ENCODE measurements at regions of chr15 and their contacts with region 1.

Region 1: GRCh38 chr15:90071208-90071807 is 31.0 kb downstream of the IDH2 start:
- DNase-seq: peak; percentile 93

Region 2: DNA sequence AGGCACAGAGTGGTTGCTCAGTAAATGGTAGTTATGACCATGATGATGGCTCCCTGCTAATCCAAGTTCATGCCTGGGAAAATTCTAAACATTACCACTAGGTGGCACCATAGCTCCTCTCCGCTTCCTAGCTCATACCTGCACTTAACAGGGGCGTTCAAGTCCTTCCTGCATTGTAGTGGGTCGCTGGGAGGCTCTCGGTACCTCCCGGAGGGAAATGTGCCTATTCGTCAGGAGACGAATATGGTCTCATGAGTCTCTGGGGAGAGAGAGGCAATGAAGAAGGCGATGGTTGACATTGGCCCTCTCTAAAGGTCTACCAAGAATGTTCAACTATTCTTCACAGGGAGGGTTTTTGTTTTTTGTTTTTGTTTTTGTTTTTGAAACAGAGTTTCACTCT is 331.2 kb before region 1 on chr15:
- intact Hi-C with region 1: loop called in 1 of 2 experiments (anchors 10 kb)
- DNase-seq: no peak

Region 3: DNA sequence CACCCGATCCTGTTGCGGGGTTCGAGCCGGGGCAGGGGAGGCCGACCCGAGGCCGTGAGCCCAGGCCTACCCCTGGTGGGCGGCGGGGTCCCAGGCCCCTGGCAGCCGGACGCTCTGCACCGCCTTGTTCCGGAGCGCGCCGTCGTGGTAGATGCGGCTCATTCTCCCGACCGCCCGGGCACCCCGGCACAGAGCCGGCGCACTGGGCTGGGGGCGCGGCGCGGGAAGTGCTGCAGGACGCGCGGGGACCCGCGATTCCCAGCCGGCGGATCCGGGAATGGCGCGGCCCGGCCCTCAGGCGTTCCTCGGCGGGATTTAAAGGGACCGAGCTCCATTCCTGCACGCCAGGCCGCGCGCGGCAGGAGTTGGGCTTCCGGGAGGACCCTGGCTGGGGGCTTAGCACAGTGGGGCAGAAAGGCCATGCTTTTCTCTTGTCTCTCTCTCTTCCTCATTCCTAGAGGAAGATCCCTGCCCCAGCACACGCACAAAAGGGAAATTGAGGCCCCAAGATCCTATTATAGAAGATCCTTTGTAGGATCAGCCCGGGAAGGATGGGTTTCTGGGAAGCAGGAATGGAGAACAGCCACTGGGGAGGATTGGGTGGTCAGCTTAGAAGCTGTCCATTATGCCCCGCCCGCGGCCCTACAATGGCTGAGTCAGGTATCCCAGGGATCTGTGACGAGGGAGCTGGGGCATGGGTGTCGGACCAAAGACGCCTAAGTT is 158.5 kb before region 1 on chr15 and contains the start of gene ARPIN:
- intact Hi-C with region 1: loop called in 1 of 2 experiments (anchors 5 kb)
- DNase-seq: peak; percentile 89
- total RNA-seq, gene ARPIN: 17.5 to 24.7 TPM

Region 4: DNA sequence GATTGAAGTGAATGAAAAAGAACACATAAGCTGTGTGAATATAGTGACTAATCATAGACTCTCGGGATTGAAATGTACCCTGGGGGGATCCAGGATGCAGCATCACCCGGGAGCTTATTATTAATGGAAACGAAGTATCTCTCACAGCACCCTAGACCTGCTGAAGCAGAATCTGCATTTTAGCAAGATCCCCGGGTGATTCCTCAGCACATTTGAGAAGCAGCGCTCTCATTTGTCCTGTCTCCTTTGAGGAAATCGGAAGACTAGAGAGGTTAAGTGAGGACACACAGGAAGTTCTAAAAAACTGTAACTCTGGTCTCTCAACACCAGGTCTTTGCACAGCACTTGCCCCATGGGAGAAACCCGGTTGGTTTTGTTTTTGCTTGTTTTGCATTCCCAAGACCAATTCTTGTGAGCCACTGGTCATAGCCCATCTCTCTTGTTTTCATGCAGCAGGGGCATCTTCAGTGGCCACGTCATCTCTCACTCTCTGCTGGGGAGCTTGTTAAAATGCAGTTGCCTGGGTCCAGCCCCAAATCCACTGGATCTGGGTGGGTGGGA is 40.0 kb before region 1 on chr15:
- intact Hi-C with region 1: no loop called
- DNase-seq: peak; percentile 67

Measured in posterior vena cava (tissue), 2 donors.